BJ (cell line): ENCODE measurements at regions of chr22 and their contacts with region 1.

Region 1: DNA sequence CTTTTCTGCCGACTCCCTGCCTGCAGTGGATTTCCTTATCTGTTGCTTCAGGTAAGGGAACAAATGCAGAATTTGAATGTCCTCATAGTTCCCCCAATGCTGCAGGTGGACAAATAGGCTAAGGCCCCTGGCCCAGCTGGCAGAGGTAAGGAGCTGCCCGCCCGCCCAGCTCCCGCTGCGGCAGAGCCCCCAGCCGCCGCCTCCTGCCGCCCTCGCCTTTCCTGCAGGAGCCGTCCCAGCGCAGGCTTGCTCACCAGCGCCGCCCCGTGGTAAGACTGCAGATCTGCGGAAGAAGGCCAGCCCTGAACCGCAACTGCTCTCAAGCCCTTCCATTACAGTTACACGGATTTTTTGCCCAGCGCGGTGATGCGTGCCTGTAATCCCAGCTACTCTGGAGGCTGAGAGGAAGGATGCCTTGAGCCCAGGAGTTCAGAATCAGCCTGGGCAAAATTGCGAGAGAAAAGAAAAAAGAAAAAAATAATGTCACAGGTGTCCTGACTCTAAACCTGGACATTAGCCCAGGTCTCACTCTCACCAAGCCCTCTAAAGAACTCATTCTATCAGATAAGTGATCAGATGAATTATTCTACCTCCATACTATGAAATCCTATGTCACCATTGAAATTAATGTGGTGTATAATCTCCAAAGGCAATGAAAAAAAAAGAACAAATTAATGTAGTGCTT is 51.2 kb upstream of the EMID1 start:
- DNase-seq: no peak
- H3K4me3 ChIP-seq: no peak overlapping the region
- H3K27me3 ChIP-seq: peaks cover 5% of the 10 kb centered on the region; the same call in 1 of the 2 replicates
- CTCF ChIP-seq: peak; percentile 96

Region 2: DNA sequence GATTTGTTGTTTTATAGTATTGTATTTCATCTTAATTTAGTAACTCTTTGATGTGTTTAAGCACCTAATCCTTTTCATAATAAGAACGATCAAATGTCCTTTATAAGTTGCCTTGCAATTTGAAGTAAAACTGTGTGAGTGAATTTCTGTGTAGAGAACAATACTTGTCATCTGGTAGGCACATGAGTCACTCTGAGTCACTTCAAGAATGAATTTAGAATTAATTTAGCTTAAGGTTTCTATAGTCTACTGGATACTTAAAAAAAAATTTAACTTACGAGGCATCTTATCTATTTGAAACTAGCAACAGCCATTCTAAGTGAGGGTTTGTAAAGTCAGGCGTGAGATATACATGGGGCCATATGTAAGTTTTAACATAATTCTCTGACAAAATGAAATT is 177.9 kb before region 1 on chr22:
- CTCF ChIA-PET with region 1: no interaction called
- POLR2A ChIA-PET with region 1: no interaction called
- DNase-seq: no peak
- H3K4me3 ChIP-seq: no peak overlapping the region
- H3K27me3 ChIP-seq: no peaks in the 10 kb centered on the region
- CTCF ChIP-seq: no peak

Region 3: GRCh38 chr22:29093501-29094300 is 60.8 kb before region 1 on chr22:
- CTCF ChIA-PET with region 1: interaction called, 12 read pairs
- POLR2A ChIA-PET with region 1: no interaction called
- DNase-seq: peak; percentile 75
- H3K4me3 ChIP-seq: no peak overlapping the region
- H3K27me3 ChIP-seq: no peaks in the 10 kb centered on the region
- CTCF ChIP-seq: no peak

Region 4: DNA sequence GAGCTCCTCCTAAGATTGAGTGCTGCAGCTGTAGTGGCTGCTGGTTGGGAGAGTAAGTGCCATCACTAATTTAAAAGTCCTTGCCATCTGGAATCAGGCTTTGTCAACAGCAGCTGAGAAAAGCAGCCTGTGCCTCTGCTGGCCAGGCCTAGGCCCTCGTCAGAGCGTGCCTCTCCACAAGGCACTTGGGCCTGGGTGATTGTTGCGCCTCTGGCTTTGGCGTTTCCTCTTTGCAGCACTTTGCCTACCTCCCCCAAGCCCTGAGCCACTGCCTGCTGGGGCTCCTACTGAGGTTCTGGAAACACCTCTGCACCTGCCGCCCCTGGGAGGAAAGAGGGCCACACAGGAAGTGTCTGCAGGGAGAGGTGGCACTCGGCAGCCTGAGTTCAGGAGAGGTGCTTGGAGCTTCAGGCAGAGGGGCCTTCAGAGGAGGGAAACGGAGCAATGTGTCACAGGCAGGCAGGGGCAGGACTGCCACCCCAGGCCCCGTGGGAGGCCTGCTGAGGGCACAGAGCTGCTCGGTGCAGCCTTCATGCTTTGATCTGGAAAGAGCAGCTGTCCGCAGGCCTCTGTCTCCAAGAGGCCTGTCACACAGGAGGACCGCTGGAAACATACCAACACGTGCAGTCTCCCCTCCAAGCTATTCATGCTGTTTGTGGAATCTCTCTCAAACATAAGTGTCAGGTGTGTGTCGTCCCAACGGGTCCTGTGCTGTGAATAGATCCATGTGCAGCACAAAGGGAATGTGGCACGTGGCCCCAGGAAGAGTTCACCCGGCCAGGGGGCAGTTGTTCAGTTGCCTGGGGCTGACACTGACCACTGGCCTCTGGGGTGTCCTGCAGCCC is 10.3 kb before region 1 on chr22:
- CTCF ChIA-PET with region 1: interaction called, 18 read pairs
- POLR2A ChIA-PET with region 1: no interaction called
- DNase-seq: no peak
- H3K4me3 ChIP-seq: no peak overlapping the region
- H3K27me3 ChIP-seq: no peaks in the 10 kb centered on the region; the same call in 1 of the 2 replicates
- CTCF ChIP-seq: no peak